ENCODE measurements at regions of chr10 and their contacts with region 1.

Region 1: GRCh38 chr10:62779487-62780248 is 24.9 kb upstream of the ADO start:
- DNase-seq: peak; percentile 31
- H3K4me3 Mint-ChIP-seq: no peak overlapping the region
- H3K27ac Mint-ChIP-seq: peak overlapping the region; percentile 51
- H3K4me1 Mint-ChIP-seq: peaks cover 36% of the 10 kb centered on the region
- H3K27me3 Mint-ChIP-seq: peaks cover 9% of the 10 kb centered on the region

Region 2: DNA sequence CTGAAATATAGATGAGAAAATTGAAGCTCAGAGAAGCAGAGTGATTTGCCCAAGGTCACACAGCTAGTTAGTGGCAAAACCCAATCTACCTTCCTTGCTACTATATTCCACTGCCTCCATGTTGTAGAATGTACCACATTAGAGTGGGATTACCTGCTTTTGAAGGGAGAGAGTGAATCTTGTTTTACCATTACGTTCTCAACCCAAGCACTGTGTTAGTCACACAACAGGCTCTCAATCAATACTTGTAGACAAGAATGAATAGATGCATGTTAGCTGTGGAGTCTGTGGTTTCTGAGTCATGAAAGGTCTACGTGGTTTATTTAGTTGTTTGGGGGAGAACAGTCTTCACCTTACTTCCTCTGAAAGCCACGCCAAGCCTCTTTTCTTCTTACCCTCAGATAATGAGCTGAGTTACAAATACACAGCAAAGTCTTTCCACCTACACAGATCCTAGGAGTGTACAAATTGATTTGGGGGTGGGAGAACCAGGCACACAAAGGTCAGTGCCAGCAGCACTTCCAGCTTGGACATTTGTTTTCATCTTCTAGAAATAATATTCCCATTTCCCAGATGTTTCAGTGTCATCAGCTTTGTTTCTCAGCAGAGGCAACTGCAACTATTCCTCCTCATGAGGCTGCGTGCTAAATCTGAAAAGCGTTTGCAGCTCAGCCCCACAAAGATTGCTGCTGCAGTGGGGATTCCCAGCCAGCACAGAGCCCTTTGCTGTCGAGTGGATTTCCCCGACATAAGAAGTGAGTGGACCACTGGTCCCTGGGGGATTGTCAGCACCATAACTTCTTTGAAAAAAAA is 46.6 kb before region 1 on chr10:
- intact Hi-C with region 1: loop called (anchors 1 kb)
- DNase-seq: peak; percentile 51
- H3K4me3 Mint-ChIP-seq: peak overlapping the region; percentile 56
- H3K27ac Mint-ChIP-seq: no peak overlapping the region
- H3K4me1 Mint-ChIP-seq: peaks cover 23% of the 10 kb centered on the region
- H3K27me3 Mint-ChIP-seq: no peaks in the 10 kb centered on the region

Region 3: DNA sequence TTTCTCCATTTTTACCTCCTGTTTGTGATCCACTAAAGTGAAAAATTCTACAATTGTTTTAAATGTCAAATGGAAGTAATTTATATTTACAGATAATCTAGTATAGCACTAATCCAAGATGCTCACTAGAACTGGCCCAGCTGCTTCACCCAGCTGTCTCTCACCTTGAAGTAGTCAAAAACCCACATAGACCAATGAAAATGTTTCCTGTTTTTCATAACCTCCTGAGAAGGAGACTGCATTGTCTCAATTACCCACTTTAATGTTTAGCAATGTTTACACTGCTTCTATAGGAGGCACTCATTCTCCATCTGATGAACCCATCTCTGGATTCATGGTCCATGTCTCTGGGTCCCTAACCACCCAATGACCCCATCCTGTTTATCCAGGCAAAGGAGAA is 31.3 kb before region 1 on chr10:
- intact Hi-C with region 1: loop called (anchors 2 kb)
- DNase-seq: no peak
- H3K4me3 Mint-ChIP-seq: no peak overlapping the region
- H3K27ac Mint-ChIP-seq: no peak overlapping the region
- H3K4me1 Mint-ChIP-seq: peaks cover 12% of the 10 kb centered on the region
- H3K27me3 Mint-ChIP-seq: peaks cover 1% of the 10 kb centered on the region

Region 4: GRCh38 chr10:62804356-62805230 is 24.9 kb after region 1 on chr10 and contains the start of gene ADO:
- intact Hi-C with region 1: loop called (anchors 1 kb)
- DNase-seq: peak; percentile 67
- H3K4me3 Mint-ChIP-seq: peak within 1 kb of the TSS; percentile 94
- H3K27ac Mint-ChIP-seq: peak within 1 kb of the TSS; percentile 99
- H3K4me1 Mint-ChIP-seq: peaks cover 33% of the 10 kb centered on the region
- H3K27me3 Mint-ChIP-seq: peaks cover 13% of the 10 kb centered on the region
- total RNA-seq, gene ADO: 34.1 and 35.1 TPM in 2 replicates

Region 5: DNA sequence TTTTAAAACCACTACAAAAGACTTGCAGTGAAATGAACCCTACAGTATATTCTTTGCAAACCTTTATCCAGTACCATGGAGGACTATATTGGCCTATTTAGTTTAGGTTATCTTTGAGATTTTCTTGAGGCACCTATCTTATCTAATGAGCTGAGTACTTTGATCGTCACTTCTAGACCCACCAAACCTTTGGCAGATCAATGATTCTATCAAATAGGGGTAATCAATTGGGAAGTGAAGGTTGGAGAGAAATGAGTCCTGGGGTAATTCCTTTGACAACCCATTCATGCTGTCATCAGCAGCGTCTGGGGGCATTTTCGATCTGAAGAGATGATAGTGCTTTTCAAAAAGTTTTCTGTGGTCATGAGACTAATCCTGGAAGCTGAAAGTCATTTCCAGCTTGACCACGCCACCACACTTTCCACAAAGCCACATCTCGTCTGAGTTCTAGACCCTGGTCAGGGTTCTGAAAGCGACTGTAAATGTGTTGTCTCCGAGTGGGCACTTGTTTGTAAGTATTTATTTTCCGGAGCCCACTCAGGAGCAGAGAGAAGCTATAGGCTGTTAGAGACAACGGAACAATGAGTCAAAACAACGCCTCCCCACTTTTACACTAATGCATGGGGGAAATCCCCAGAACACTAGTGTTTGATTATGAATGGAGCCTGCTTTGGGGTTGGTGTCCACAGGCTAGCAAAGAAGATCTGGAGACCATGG is 31.6 kb after region 1 on chr10:
- intact Hi-C with region 1: loop called (anchors 1 kb)
- DNase-seq: peak; percentile 58
- H3K4me3 Mint-ChIP-seq: peak overlapping the region; percentile 97
- H3K27ac Mint-ChIP-seq: peak overlapping the region; percentile 83
- H3K4me1 Mint-ChIP-seq: peaks cover 67% of the 10 kb centered on the region
- H3K27me3 Mint-ChIP-seq: peaks cover 2% of the 10 kb centered on the region

Region 6: DNA sequence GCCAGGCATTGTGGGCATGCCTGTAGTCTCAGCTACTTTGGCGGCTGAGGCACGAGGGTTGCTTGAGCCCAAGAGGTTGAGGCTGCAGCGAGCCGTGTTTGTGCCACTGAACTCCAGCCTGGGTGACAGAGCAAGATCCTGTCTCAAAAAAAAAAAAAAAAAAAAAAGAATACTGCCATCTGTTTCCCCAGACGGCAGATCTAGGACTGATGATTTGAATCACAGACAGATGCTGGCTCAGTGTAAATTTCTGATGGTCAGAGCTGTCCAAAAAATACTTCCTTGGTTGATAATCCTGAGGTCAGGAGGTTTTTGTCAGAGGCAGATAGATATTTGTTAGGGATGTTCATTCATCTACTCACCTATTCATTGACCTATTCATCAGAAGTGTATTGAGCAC is 872.2 kb after region 1 on chr10:
- intact Hi-C with region 1: no loop called
- DNase-seq: no peak
- H3K4me3 Mint-ChIP-seq: no peak overlapping the region
- H3K27ac Mint-ChIP-seq: no peak overlapping the region
- H3K4me1 Mint-ChIP-seq: no peaks in the 10 kb centered on the region
- H3K27me3 Mint-ChIP-seq: peaks cover 4% of the 10 kb centered on the region